ENCODE measurements at regions of chr20 and their contacts with region 1.

Region 1: DNA sequence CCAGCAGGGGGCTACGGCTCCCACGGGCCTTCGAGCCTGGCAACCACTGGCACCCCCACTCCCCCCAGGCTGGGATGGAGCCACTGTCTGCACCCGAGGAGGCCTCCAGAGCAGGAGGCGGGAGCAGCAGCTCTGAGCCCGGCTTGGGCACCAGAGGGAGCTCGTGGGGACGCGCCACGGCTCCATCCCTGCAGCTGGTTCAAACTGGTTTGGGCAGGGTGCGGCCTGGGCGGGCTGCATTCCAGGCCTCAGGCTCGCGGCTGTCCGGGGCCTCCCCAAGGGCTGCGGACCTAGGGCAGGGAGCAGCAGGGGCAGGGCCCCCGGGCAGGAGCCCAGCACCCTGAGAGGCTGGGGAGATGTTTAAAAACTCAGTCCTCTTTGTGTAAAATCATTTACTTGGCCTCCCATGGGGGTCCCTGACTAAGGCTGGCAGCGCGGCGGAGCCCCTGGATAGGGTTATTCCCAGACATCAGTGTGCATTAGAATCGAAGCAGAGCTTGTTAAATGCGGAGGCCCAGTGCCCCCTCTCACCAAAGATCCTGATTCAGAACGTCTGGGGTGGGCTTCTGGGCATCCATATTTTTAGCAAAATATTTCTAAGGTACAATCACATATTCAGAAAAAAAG is 4.1 kb upstream of the BCAS4 start:
- DNase-seq: peak; percentile 93
- ATAC-seq: peak; percentile 86
- H3K4me3 Mint-ChIP-seq: no peak overlapping the region
- H3K27ac Mint-ChIP-seq: peak overlapping the region; percentile 75
- H3K4me1 Mint-ChIP-seq: peaks cover 12% of the 10 kb centered on the region
- H3K27me3 Mint-ChIP-seq: no peaks in the 10 kb centered on the region

Region 2: GRCh38 chr20:50534567-50535551 is 255.9 kb before region 1 on chr20:
- CTCF ChIA-PET with region 1: no interaction called
- POLR2A ChIA-PET with region 1: no interaction called
- intact Hi-C with region 1: no loop called
- DNase-seq: no peak
- ATAC-seq: no peak
- H3K4me3 Mint-ChIP-seq: no peak overlapping the region
- H3K27ac Mint-ChIP-seq: peak overlapping the region; percentile 56
- H3K4me1 Mint-ChIP-seq: peaks cover 73% of the 10 kb centered on the region
- H3K27me3 Mint-ChIP-seq: no peaks in the 10 kb centered on the region

Region 3: DNA sequence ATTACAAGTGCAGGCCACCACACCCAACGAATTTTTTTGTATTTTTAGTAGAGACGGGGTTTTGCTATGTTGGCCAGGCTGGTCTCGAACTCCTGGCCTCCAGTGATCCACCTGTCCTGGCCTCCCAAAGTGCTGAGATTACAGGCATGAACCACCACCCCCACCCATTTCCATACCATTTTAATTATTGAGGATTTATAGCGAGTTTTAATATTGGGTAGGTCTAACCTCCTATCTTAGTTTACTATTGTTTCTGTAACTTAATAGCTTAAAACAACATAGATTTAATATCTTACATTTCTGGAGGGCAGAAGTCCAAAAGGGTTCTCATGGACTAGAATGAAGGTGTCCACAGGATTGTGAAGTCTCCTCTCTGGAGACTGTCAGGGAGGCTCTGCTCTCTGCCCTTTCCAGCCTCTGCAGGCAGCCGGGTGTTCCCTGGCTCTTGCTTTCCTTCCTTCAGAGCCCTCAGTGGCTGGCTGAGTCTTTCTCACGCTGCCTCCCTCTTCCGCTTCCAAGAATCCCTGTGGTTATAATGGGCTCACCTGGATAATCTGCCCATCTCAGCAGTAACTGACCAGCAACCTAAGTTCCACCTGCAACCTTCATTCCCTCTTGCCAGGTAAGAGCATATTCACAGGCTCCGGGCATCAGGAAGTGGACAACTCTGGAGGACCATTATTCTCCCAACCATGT is 14.5 kb before region 1 on chr20:
- CTCF ChIA-PET with region 1: interaction called, 12 read pairs
- POLR2A ChIA-PET with region 1: no interaction called
- intact Hi-C with region 1: no loop called
- DNase-seq: no peak
- ATAC-seq: no peak
- H3K4me3 Mint-ChIP-seq: no peak overlapping the region
- H3K27ac Mint-ChIP-seq: no peak overlapping the region
- H3K4me1 Mint-ChIP-seq: peaks cover 2% of the 10 kb centered on the region
- H3K27me3 Mint-ChIP-seq: no peaks in the 10 kb centered on the region

Region 4: GRCh38 chr20:50838701-50839369 is 48.1 kb after region 1 on chr20:
- CTCF ChIA-PET with region 1: no interaction called
- POLR2A ChIA-PET with region 1: no interaction called
- intact Hi-C with region 1: no loop called
- DNase-seq: no peak
- ATAC-seq: peak; percentile 47
- H3K4me3 Mint-ChIP-seq: no peak overlapping the region
- H3K27ac Mint-ChIP-seq: no peak overlapping the region
- H3K4me1 Mint-ChIP-seq: peaks cover 3% of the 10 kb centered on the region
- H3K27me3 Mint-ChIP-seq: no peaks in the 10 kb centered on the region

Region 5: GRCh38 chr20:50891138-50891537 is 100.4 kb after region 1 on chr20:
- CTCF ChIA-PET with region 1: interaction called, 11 read pairs
- POLR2A ChIA-PET with region 1: no interaction called
- intact Hi-C with region 1: no loop called
- DNase-seq: no peak
- ATAC-seq: no peak
- H3K4me3 Mint-ChIP-seq: no peak overlapping the region
- H3K27ac Mint-ChIP-seq: peak overlapping the region; percentile 44
- H3K4me1 Mint-ChIP-seq: peaks cover 38% of the 10 kb centered on the region
- H3K27me3 Mint-ChIP-seq: no peaks in the 10 kb centered on the region

Region 6: GRCh38 chr20:50919567-50919966 is 128.8 kb after region 1 on chr20:
- CTCF ChIA-PET with region 1: interaction called, 10 read pairs
- POLR2A ChIA-PET with region 1: interaction called, 3 read pairs
- intact Hi-C with region 1: loop called (anchors 5 kb)
- DNase-seq: peak; percentile 31
- ATAC-seq: no peak
- H3K4me3 Mint-ChIP-seq: no peak overlapping the region
- H3K27ac Mint-ChIP-seq: peak overlapping the region; percentile 24
- H3K4me1 Mint-ChIP-seq: peaks cover 85% of the 10 kb centered on the region
- H3K27me3 Mint-ChIP-seq: no peaks in the 10 kb centered on the region

Region 7: GRCh38 chr20:50980851-50981713 is 190.3 kb after region 1 on chr20:
- CTCF ChIA-PET with region 1: interaction called, 14 read pairs
- POLR2A ChIA-PET with region 1: interaction called, 3 read pairs
- intact Hi-C with region 1: loop called in 1 of 2 experiments (anchors 1 kb)
- DNase-seq: peak; percentile 84
- ATAC-seq: no peak
- H3K4me3 Mint-ChIP-seq: no peak overlapping the region
- H3K27ac Mint-ChIP-seq: peak overlapping the region; percentile 90
- H3K4me1 Mint-ChIP-seq: peaks cover 20% of the 10 kb centered on the region
- H3K27me3 Mint-ChIP-seq: peaks cover 26% of the 10 kb centered on the region

Region 8: GRCh38 chr20:51121901-51122441 is 331.2 kb after region 1 on chr20:
- CTCF ChIA-PET with region 1: no interaction called
- POLR2A ChIA-PET with region 1: no interaction called
- intact Hi-C with region 1: no loop called
- DNase-seq: no peak
- ATAC-seq: no peak
- H3K4me3 Mint-ChIP-seq: no peak overlapping the region
- H3K27ac Mint-ChIP-seq: no peak overlapping the region
- H3K4me1 Mint-ChIP-seq: peaks cover 14% of the 10 kb centered on the region
- H3K27me3 Mint-ChIP-seq: peaks cover 31% of the 10 kb centered on the region

Region 9: DNA sequence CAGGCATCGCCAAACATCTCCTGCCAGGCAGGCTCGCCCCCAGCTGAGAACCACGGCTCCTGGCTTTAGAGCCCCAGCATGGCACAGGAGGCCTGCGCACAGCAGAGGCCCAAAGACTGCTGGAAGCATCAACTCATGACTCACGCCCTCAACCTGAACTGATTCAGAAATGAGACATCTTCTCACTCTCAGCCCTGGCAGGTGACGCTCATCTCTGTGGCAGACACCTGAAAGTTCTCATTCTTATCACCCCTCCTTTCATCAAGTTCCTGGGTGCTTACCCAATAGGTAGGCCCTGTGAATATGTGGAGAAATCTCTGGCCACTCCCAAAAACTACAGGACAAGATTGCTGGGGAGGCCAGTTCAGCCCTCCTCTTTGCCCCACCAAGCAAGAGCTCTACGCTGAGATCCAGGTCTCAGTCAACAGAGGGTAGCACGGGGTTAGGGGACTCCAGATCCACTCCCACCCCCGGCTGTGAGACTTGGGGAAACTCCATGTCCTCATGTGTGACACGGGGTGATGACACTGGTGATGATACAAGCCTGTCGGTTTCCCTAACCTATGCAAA is 740.5 kb after region 1 on chr20:
- CTCF ChIA-PET with region 1: no interaction called
- POLR2A ChIA-PET with region 1: no interaction called
- intact Hi-C with region 1: loop called in 1 of 2 experiments (anchors 10 kb)
- DNase-seq: peak; percentile 90
- ATAC-seq: peak; percentile 82
- H3K4me3 Mint-ChIP-seq: peak overlapping the region; percentile 75
- H3K27ac Mint-ChIP-seq: peak overlapping the region; percentile 99
- H3K4me1 Mint-ChIP-seq: peaks cover 99% of the 10 kb centered on the region
- H3K27me3 Mint-ChIP-seq: no peaks in the 10 kb centered on the region